HCT116 (cell line): ENCODE measurements at regions of chr5 and their contacts with region 1.

Region 1: GRCh38 chr5:84274585-84275468 is 109.9 kb downstream of the EDIL3 start:
- DNase-seq: peak; percentile 26
- ATAC-seq: peak; percentile 60
- H3K4me3 ChIP-seq: no peak overlapping the region
- H3K27ac ChIP-seq: no peak overlapping the region
- H3K4me1 ChIP-seq: no peaks in the 10 kb centered on the region
- H3K27me3 ChIP-seq: no peaks in the 10 kb centered on the region
- CTCF ChIP-seq: peak; percentile 35 to 69 (median 55); a peak in 5 of 6 replicates
- POLR2A ChIP-seq: no peak
- RAD21 ChIP-seq: peak; percentile 58

Region 2: GRCh38 chr5:84322646-84323045 is 47.8 kb after region 1 on chr5:
- CTCF ChIA-PET with region 1: no interaction called
- POLR2A ChIA-PET with region 1: no interaction called
- RAD21 ChIA-PET with region 1: no interaction called
- intact Hi-C with region 1: no loop called
- DNase-seq: no peak
- ATAC-seq: no peak
- H3K4me3 ChIP-seq: no peak overlapping the region
- H3K27ac ChIP-seq: no peak overlapping the region
- H3K4me1 ChIP-seq: no peaks in the 10 kb centered on the region
- H3K27me3 ChIP-seq: no peaks in the 10 kb centered on the region
- CTCF ChIP-seq: no peak
- POLR2A ChIP-seq: no peak
- RAD21 ChIP-seq: no peak

Region 3: DNA sequence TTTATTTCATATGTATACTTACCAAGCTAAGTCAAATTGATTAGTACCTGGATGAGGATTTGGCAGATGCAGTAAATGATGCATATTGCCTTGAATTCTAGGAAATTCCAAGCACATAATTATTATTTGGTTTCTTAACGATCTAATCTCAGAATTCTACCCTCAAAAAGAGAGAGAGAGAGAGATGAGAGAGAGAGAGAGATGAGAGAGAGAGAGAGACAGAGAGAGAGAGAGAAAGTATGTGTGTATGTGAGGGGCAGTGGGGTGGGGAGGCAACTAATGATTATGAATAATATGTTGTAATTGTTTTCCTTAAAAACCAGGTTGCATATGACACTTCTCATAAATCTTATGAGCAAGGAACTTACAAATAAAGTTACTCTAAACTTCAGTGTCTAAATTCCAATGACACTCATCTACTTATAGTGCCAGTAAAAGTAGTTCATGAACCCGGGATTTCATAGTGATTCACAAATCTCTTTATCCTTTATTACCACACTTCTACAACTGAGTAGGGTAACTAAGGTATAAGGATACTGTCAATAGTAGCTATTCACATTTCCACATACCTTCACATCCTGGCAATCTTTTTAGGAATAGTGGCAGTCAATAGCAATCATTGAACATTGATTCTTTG is 170.3 kb after region 1 on chr5:
- CTCF ChIA-PET with region 1: no interaction called
- POLR2A ChIA-PET with region 1: no interaction called
- RAD21 ChIA-PET with region 1: no interaction called
- intact Hi-C with region 1: loop called (anchors 10 kb)
- DNase-seq: no peak
- ATAC-seq: no peak
- H3K4me3 ChIP-seq: no peak overlapping the region
- H3K27ac ChIP-seq: no peak overlapping the region
- H3K4me1 ChIP-seq: no peaks in the 10 kb centered on the region
- H3K27me3 ChIP-seq: no peaks in the 10 kb centered on the region
- CTCF ChIP-seq: no peak
- POLR2A ChIP-seq: no peak
- RAD21 ChIP-seq: no peak

Region 4: DNA sequence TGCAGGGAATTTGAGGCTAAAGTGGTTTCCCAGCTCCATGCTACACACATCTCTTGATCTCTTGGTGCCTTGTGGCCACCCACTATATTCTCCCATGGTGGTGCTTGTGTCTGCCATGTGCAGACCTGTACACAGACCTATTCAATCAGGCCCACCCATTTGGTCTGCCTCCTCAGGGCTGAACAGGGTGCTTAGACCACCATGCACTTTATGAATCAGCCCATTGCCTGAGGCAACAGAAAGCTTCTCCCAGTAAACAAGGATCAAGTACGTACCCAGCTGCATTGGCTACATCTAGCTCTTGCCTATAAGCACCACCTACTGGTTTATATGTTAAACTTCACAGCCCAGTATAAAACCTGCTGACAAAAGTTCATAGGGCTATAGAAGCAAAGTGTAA is 774.2 kb after region 1 on chr5:
- CTCF ChIA-PET with region 1: no interaction called
- POLR2A ChIA-PET with region 1: no interaction called
- RAD21 ChIA-PET with region 1: no interaction called
- intact Hi-C with region 1: loop called (anchors 2 kb)
- DNase-seq: peak; percentile 8
- ATAC-seq: peak; percentile 86
- H3K4me3 ChIP-seq: no peak overlapping the region
- H3K27ac ChIP-seq: no peak overlapping the region
- H3K4me1 ChIP-seq: no peaks in the 10 kb centered on the region
- H3K27me3 ChIP-seq: no peaks in the 10 kb centered on the region
- CTCF ChIP-seq: peak; percentile 18 to 51 (median 37); a peak in 4 of 6 replicates
- POLR2A ChIP-seq: no peak
- RAD21 ChIP-seq: peak; percentile 55